ENCODE measurements at regions of chr12 and their contacts with region 1.

Region 1: GRCh38 chr12:53543539-53543938 is 36.3 kb upstream of the NPFF start:
- DNase-seq: peak; percentile 79
- ATAC-seq: peak; percentile 99
- H3K4me3 Mint-ChIP-seq: no peak overlapping the region
- H3K27ac Mint-ChIP-seq: peak overlapping the region; percentile 79
- H3K4me1 Mint-ChIP-seq: peaks cover 16% of the 10 kb centered on the region
- H3K27me3 Mint-ChIP-seq: no peaks in the 10 kb centered on the region
- CTCF ChIP-seq: peak; percentile 87

Region 2: DNA sequence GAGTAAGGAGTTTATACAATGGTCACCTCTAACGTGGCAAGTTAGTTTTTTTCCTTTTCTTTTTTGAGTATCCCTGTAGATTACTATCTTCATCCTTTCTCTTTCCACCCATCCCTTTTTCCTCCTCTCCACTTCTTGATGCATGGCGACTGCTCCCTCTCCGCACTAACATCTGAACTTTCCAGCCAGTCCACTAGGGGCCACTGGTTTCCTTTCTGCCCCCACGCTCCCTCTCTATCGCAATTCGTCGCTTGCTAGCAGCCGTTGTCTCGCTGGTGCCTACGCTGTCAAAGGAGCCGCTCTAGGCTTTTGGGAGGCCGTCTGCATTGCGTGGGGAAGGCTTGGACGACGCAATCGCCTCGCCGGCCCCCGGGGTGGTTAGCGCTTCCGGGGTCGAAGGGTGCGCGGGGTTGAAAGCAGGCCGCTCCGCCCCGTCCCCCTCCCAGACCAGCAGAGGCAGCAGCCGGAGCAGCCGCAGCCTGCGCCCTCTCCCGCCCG is 91.8 kb before region 1 on chr12 and contains the start of gene PCBP2:
- CTCF ChIA-PET with region 1: no interaction called
- POLR2A ChIA-PET with region 1: no interaction called
- intact Hi-C with region 1: no loop called
- DNase-seq: peak; percentile 98
- ATAC-seq: peak; percentile 94
- H3K4me3 Mint-ChIP-seq: peak within 1 kb of the TSS; percentile 91
- H3K27ac Mint-ChIP-seq: peak within 1 kb of the TSS; percentile 99
- H3K4me1 Mint-ChIP-seq: peaks cover 38% of the 10 kb centered on the region
- H3K27me3 Mint-ChIP-seq: no peaks in the 10 kb centered on the region
- CTCF ChIP-seq: peak; percentile 86
- total RNA-seq, gene PCBP2: 958 to 973 TPM

Region 3: DNA sequence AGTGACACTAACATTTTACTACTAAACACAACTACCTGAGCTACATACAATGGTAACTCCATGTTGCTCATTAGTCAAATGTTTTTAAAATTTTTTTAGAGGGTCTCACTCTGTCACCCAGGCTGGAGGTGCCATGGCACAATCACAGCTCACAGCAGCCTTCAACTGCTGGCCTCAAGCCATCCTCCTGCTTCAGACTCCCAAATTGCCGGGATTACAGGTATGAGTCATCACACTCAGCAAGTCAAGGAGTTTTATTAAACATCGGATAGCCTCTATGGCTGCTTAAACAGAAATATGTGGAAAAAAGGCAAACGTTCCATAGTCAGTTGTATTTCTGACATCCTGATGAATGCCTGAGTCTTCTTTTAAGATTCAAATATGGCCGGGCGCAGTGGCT is 25.2 kb before region 1 on chr12:
- CTCF ChIA-PET with region 1: interaction called, 10 read pairs
- POLR2A ChIA-PET with region 1: no interaction called
- intact Hi-C with region 1: no loop called
- DNase-seq: no peak
- ATAC-seq: no peak
- H3K4me3 Mint-ChIP-seq: no peak overlapping the region
- H3K27ac Mint-ChIP-seq: no peak overlapping the region
- H3K4me1 Mint-ChIP-seq: no peaks in the 10 kb centered on the region
- H3K27me3 Mint-ChIP-seq: no peaks in the 10 kb centered on the region
- CTCF ChIP-seq: no peak

Region 4: GRCh38 chr12:53532524-53533445 is 10.8 kb before region 1 on chr12:
- CTCF ChIA-PET with region 1: interaction called, 10 read pairs
- POLR2A ChIA-PET with region 1: no interaction called
- intact Hi-C with region 1: no loop called
- DNase-seq: no peak
- ATAC-seq: no peak
- H3K4me3 Mint-ChIP-seq: no peak overlapping the region
- H3K27ac Mint-ChIP-seq: no peak overlapping the region
- H3K4me1 Mint-ChIP-seq: no peaks in the 10 kb centered on the region
- H3K27me3 Mint-ChIP-seq: no peaks in the 10 kb centered on the region
- CTCF ChIP-seq: no peak

Region 5: DNA sequence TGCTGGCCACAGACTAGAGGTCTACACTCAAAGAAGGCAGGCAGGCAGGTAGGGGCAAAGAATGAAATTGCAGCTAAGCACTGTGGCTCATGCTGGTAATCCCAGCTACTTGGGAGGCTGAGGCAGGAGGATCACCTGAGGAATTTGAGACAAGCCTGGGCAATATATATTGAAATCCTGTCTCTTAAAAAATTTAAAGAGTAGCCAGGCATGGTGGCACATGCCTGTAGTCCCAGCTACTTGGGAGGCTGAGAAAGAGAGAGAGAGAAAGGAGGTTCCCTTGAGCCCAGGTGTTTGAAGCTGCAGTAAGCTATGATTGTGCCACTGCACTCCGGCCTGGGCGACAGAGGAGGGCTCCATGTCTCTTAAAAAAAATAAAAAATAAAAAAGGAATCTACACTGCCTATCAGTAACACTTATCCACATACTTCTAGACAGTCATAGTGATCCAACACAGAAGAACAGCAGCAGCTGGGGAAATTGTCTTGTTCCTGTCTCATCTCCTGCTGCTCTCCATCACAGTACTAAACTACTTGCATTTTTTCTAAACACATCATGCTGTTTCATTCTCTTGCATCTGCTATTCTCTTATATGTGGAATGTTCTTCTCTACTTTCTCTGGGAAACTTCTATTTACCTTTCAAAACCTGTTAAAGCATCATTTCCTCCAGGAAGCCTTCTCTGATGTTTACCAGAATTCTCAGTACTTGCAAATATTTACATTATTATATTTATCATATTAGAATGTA is 25.4 kb after region 1 on chr12:
- CTCF ChIA-PET with region 1: interaction called, 12 read pairs
- POLR2A ChIA-PET with region 1: no interaction called
- intact Hi-C with region 1: no loop called
- DNase-seq: no peak
- ATAC-seq: no peak
- H3K4me3 Mint-ChIP-seq: no peak overlapping the region
- H3K27ac Mint-ChIP-seq: no peak overlapping the region
- H3K4me1 Mint-ChIP-seq: peaks cover 35% of the 10 kb centered on the region
- H3K27me3 Mint-ChIP-seq: no peaks in the 10 kb centered on the region
- CTCF ChIP-seq: no peak

Region 6: GRCh38 chr12:53613821-53614220 is 70.3 kb after region 1 on chr12:
- CTCF ChIA-PET with region 1: interaction called, 13 read pairs
- POLR2A ChIA-PET with region 1: no interaction called
- intact Hi-C with region 1: no loop called
- DNase-seq: no peak
- ATAC-seq: no peak
- H3K4me3 Mint-ChIP-seq: no peak overlapping the region
- H3K27ac Mint-ChIP-seq: no peak overlapping the region
- H3K4me1 Mint-ChIP-seq: peaks cover 23% of the 10 kb centered on the region
- H3K27me3 Mint-ChIP-seq: no peaks in the 10 kb centered on the region
- CTCF ChIP-seq: no peak

Region 7: GRCh38 chr12:53670299-53670698 is 126.8 kb after region 1 on chr12:
- CTCF ChIA-PET with region 1: interaction called, 96 read pairs
- POLR2A ChIA-PET with region 1: interaction called, 19 read pairs
- intact Hi-C with region 1: no loop called
- DNase-seq: no peak
- ATAC-seq: no peak
- H3K4me3 Mint-ChIP-seq: no peak overlapping the region
- H3K27ac Mint-ChIP-seq: peak overlapping the region; percentile 42
- H3K4me1 Mint-ChIP-seq: peaks cover 34% of the 10 kb centered on the region
- H3K27me3 Mint-ChIP-seq: no peaks in the 10 kb centered on the region
- CTCF ChIP-seq: no peak

Region 8: DNA sequence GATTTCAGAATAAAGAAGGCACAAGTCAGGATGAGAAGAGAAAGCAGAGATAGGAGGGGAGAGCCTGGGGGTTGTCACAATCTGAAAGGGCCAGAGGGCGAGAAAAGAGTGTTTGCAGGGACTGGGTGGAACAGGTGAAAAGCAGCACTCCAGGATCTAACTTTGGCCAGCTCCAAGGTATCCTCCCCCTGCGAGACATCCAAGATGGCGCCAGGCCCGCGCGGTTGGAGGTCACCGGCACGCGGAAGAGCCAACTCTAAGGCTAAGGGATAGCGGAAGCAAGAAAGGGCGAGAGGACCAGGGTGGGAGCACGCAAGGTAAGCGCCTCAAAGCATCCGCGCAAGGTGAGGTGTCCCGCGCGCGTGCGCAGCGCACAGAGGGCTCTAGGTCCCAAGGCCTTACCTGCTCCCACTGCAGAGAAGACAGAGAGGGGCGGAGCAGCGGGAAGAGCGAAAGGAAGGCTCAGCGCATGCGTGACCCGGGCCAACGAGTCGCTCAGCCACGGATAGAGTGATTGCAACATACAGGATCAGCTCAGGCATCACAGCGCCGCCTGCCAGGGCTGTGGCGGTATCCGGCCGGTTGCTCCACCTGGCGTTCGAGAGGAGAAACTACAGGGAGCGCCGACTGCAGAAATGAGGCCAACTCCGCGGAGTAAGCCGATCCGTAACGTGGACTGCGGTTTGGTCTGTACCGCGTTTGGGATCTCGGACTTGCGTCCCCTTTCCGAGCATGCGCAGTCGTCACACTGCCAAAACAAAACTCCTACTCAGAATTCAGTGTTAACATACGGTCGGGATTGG is 132.3 kb after region 1 on chr12 and contains the start of gene ATP5MC2:
- CTCF ChIA-PET with region 1: interaction called, 96 read pairs
- POLR2A ChIA-PET with region 1: interaction called, 19 read pairs
- intact Hi-C with region 1: loop called (anchors 2 kb)
- DNase-seq: peak; percentile 98
- ATAC-seq: peak; percentile 93
- H3K4me3 Mint-ChIP-seq: peak within 1 kb of the TSS; percentile 95
- H3K27ac Mint-ChIP-seq: peak within 1 kb of the TSS; percentile 96
- H3K4me1 Mint-ChIP-seq: peaks cover 35% of the 10 kb centered on the region
- H3K27me3 Mint-ChIP-seq: peaks cover 19% of the 10 kb centered on the region
- CTCF ChIP-seq: peak; percentile 98
- total RNA-seq, gene ATP5MC2: 365 to 378 TPM

Measured in activated CD8-positive, alpha-beta T cell treated with anti-CD3 and anti-CD28 coated beads for 36 hours (primary cell).